ENCODE measurements at regions of chr1 and their contacts with region 1.

Region 1: GRCh38 chr1:115469703-115470476 is 131.8 kb upstream of the NGF start:
- DNase-seq: peak; percentile 67
- H3K27ac ChIP-seq: peak overlapping the region; percentile 77
- CTCF ChIP-seq: peak; percentile 86

Region 2: GRCh38 chr1:115595279-115596079 is 125.6 kb after region 1 on chr1:
- CTCF ChIA-PET with region 1: interaction called, 11 read pairs
- POLR2A ChIA-PET with region 1: no interaction called
- DNase-seq: peak; percentile 77
- H3K27ac ChIP-seq: peak overlapping the region; percentile 36; the same call in 1 of the 2 replicates
- CTCF ChIP-seq: peak; percentile 94